Endothelial cell of umbilical vein (primary cell): ENCODE measurements at regions of chr13 and their contacts with region 1.

Region 1: DNA sequence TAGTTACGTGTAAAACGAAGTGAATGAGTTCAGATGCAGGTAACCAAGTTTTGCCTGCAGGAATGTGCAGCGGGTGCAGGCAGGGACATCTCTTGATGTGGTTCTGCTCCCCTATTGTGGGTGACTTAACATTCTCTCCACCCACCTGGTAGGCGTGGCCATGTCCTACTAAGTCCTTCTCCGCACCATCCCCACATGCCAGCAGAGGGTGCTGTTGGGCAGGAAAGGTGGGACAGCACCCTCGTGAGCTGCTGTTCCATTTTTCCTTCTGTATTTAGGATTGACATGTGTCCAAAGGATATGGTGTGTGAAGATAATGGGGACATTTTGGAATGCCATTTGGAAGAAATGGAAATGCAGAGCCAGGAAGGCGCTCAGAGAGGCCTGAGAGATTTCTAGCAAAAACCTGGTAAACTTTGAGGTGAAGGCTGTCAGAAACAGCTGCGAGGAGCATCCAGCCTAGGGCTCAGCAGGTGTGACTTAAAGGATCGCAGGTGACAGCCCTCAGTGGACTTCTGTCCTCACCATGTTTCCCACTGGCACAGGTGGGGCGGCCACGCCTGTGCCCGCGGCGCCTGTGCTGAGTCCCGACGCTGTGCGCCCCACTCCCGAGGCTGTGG is 26.2 kb upstream of the MCF2L start:
- DNase-seq: peak; percentile 92
- H3K4me3 ChIP-seq: peak overlapping the region in 2 of 3 experiments; percentile 0 to 24
- H3K27ac ChIP-seq: no peak overlapping the region
- H3K4me1 ChIP-seq: peaks cover 4% of the 10 kb centered on the region
- H3K27me3 ChIP-seq: peaks cover 3 to 7% of the 10 kb centered on the region in 2 experiments
- CTCF ChIP-seq: peak; percentile 92 to 98
- POLR2A ChIP-seq: no peak

Region 2: DNA sequence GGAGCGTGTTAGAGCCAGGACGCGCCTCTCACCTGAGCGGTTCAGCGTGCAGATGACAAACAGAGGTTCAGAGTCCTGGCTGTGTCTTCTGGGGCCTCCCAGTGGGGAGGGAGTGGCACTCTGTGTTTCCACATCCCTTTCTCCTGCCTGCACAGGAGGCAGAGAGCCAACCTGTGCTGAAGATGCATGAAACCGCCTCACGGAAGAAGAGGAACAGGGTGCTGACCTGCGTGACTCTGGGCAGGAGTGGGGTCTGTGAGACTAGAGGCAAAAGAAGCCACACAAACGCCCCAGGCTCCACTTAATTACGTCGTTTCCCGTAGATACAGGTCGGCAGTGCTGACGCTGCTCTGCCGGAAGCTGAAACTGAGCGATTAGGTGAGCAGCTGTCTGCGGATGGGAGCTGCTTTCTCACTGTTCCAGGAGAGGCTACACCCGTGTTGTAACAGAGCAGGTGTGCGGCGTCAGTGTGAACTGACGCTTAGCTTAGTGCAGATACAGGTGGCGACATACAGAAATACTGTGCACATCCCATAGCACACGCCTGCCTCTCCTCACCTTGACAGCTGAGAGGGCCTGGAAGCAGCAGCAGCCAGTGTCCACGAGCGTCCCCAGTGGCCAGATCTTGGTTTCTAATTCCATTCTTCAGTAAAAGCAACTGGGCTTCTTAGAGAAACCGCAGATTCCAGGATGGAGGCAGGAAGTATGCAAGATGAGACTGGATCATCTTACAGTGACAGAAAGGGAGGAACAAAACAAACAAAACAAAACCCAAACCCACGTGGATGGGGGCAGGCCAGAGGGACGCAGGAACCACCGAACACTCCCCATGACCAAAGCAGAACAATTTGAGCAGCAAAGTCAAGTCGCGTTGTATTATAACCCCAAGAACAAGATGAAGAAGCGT is 11.5 kb before region 1 on chr13:
- CTCF ChIA-PET with region 1: interaction called, 13 read pairs
- POLR2A ChIA-PET with region 1: no interaction called
- dilution Hi-C with region 1: no loop called
- intact Hi-C with region 1: no loop called
- DNase-seq: peak; percentile 10
- H3K4me3 ChIP-seq: no peak overlapping the region
- H3K27ac ChIP-seq: no peak overlapping the region
- H3K4me1 ChIP-seq: peaks cover 7% of the 10 kb centered on the region
- H3K27me3 ChIP-seq: peaks cover 27 to 39% of the 10 kb centered on the region in 2 experiments
- CTCF ChIP-seq: peak; percentile 29 to 50
- POLR2A ChIP-seq: no peak

Region 3: DNA sequence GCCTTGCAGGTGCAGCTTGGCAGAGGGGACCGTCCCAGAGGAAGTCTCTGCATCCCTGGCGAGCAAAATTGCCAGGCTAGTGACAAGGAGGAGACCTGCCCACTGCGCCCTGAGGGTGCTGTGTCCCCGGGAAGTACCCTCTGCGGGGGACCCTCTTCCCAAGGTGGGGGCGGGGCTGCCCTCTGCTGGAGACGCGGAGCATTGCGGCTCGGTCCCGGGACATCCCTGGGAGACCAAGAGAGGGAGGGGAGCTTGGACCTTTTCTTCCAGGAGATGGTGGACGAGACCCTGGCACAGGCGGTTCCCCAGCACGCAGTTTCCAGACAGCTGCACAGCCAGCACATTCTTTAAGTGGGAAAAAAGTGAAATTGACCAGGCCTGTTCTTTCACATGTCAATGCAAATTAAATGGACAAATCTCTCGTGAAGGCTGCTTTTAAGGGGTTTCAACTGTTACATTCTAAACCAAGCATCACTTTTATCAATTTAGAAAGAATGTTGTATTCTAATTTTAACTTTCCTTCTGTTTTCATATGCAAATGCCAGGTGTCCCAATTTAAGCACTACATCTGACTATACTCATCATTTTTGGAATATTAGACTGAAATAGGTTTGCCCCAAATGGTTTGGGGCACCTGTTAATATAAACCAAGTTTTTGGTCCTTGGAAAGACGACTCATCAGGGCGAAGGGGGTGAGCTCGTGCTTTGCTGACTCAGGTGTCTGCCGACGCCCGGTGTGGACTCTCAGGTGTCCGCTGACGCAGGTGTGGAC is 86.9 kb after region 1 on chr13:
- CTCF ChIA-PET with region 1: interaction called, 114 read pairs
- POLR2A ChIA-PET with region 1: no interaction called
- dilution Hi-C with region 1: no loop called
- intact Hi-C with region 1: loop called (anchors 1 kb)
- DNase-seq: peak; percentile 35
- H3K4me3 ChIP-seq: no peak overlapping the region
- H3K27ac ChIP-seq: no peak overlapping the region
- H3K4me1 ChIP-seq: no peaks in the 10 kb centered on the region
- H3K27me3 ChIP-seq: no peaks in the 10 kb centered on the region
- CTCF ChIP-seq: peak; percentile 81 to 91
- POLR2A ChIP-seq: no peak

Region 4: DNA sequence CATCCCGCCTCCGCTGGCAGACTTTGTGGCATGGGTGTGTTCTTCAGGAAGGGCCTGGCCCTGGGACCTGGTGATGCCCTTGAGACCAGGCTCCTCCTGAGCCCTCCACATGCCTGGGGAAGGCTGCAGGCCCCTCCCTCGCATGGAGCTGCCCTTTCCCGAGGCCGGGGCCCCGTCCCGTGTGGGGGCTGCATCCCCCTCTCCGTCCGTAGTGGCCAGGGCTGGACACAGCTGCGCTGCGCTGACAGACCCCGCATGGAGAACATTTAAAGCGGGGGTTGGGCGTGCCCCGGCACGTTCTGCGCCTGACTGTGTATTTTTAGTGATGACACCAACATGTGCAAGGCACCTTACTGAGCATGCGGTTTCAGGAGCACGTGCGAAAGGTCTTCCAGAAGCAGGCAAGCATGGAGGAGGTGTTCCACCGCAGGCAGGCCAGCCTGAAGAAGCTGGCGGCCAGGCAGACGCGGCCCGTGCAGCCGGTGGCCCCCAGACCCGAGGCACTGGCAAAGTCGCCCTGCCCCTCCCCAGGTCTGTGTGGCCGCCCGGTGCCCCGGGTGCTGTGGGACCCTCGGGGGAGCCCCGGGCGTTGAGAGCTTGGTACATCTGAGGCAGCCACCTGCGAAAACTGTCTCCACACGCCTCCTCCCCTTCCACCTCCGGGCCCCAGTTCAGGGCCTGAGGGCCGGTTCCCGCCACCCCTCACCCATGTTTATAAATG is 134.0 kb after region 1 on chr13:
- CTCF ChIA-PET with region 1: no interaction called
- POLR2A ChIA-PET with region 1: no interaction called
- dilution Hi-C with region 1: no loop called
- intact Hi-C with region 1: no loop called
- DNase-seq: no peak
- H3K4me3 ChIP-seq: no peak overlapping the region
- H3K27ac ChIP-seq: no peak overlapping the region
- H3K4me1 ChIP-seq: no peaks in the 10 kb centered on the region
- H3K27me3 ChIP-seq: no peaks in the 10 kb centered on the region
- CTCF ChIP-seq: no peak
- POLR2A ChIP-seq: no peak

Region 5: GRCh38 chr13:113220877-113221276 is 278.1 kb after region 1 on chr13:
- CTCF ChIA-PET with region 1: no interaction called
- POLR2A ChIA-PET with region 1: no interaction called
- dilution Hi-C with region 1: no loop called
- intact Hi-C with region 1: loop called (anchors 5 kb)
- DNase-seq: no peak
- H3K4me3 ChIP-seq: no peak overlapping the region
- H3K27ac ChIP-seq: no peak overlapping the region
- H3K4me1 ChIP-seq: peaks cover 3% of the 10 kb centered on the region
- H3K27me3 ChIP-seq: no peaks in the 10 kb centered on the region
- CTCF ChIP-seq: peak in 1 of 2 donors; percentile 24
- POLR2A ChIP-seq: no peak

Region 6: GRCh38 chr13:113393563-113394338 is 451.0 kb after region 1 on chr13:
- CTCF ChIA-PET with region 1: interaction called, 44 read pairs
- POLR2A ChIA-PET with region 1: no interaction called
- dilution Hi-C with region 1: no loop called
- intact Hi-C with region 1: loop called (anchors 1 kb)
- DNase-seq: peak; percentile 61
- H3K4me3 ChIP-seq: peak overlapping the region; percentile 36 to 91 (median 60)
- H3K27ac ChIP-seq: no peak overlapping the region
- H3K4me1 ChIP-seq: peaks cover 3% of the 10 kb centered on the region
- H3K27me3 ChIP-seq: no peaks in the 10 kb centered on the region
- CTCF ChIP-seq: peak; percentile 69 to 71
- POLR2A ChIP-seq: no peak